Adrenal gland (tissue), 19 donors: ENCODE measurements at regions of chr9 and their contacts with region 1.

Region 1: DNA sequence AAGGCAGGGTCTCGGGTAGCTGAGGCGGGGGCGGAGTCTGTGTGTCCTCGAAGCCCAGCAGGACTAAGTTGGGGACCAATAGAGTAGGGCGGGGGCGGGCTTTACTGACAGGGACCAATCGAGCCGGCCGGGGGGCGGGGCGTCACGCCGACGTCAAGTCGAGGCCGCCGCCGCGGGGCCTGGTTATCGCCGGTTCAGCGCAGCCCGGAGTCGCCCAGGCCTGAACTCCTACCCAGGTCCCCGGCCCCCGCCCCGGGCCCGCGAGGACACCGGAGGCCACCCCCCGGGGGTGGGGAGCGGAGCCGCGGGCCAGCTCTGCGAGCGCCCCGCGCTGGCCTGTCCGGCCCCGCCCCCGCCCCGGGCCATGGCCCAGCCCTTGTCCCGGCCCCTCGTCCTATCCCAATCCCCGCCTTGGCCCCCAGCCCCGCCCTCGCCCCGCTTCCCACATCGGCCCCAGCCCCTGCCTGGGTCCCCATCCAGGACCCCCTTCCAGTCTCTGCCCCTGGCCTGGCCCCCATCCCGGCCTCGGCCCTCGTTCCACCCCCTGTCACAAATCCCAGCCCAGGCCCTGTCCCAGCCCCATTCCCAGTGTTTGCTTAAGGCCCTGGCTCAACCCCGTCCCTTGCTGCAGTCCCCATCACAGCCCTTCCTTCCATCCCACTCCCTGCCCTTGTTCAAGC is at the start of gene TMEM8B:
- DNase-seq: peak; percentile 94 to 99 (median 98)
- H3K4me3 ChIP-seq: peak within 1 kb of the TSS; percentile 39 to 98 (median 50)
- H3K27ac ChIP-seq: peak within 1 kb of the TSS; percentile 48 to 99 (median 93)
- H3K4me1 ChIP-seq: peaks cover 30 to 33% of the 10 kb centered on the region in 2 donors
- H3K27me3 ChIP-seq: no peaks in the 10 kb centered on the region
- CTCF ChIP-seq: no peak
- POLR2A ChIP-seq: peak in 1 of 2 donors; percentile 52
- total RNA-seq, gene TMEM8B: 5.5 to 43.6 (median 17.5) TPM

Region 2: GRCh38 chr9:35790385-35791296 is 38.6 kb before region 1 on chr9:
- intact Hi-C with region 1: loop called (anchors 2 to 5 kb)
- DNase-seq: peak; percentile 71 to 90 (median 79)
- H3K4me3 ChIP-seq: no peak overlapping the region
- H3K27ac ChIP-seq: peak overlapping the region in 2 of 5 donors; percentile 64 to 82
- H3K4me1 ChIP-seq: peaks cover 5 to 23% of the 10 kb centered on the region in 2 donors
- H3K27me3 ChIP-seq: no peaks in the 10 kb centered on the region
- CTCF ChIP-seq: peak; percentile 84 to 96 (median 88)
- POLR2A ChIP-seq: no peak

Region 3: DNA sequence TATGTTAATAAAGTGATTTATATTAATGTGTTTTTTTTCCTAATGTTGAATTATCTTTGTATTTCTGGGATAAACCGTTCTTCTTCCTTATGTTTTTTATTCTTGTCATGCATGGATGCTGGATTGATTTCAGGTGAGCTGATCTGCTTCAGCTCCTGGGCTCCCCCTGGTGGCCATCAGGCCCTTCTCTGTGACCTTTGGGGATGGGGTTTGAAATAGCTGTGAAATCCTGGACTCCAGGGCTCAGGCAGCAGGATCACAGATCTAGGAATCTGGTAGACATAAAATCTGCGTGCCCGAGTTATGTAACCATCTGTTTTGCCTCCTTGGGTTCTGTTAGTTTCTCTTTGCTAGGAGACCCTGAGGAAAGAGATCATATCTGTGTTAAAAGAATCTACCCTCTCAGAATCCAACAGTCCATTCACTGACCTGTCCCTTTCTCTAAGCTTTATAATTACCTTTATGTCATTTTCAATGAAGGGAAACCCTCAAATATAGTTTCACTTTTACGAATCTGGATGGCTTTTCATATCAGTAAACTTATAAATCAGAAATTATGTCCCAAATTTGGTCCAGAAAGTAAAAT is 53.1 kb after region 1 on chr9:
- intact Hi-C with region 1: loop called in 1 of 2 experiments (anchors 5 kb)
- DNase-seq: peak; percentile 73 to 94 (median 86)
- H3K4me3 ChIP-seq: no peak overlapping the region
- H3K27ac ChIP-seq: no peak overlapping the region
- H3K4me1 ChIP-seq: no peaks in the 10 kb centered on the region
- H3K27me3 ChIP-seq: no peaks in the 10 kb centered on the region
- CTCF ChIP-seq: peak; percentile 85 to 98 (median 94)
- POLR2A ChIP-seq: no peak

Region 4: DNA sequence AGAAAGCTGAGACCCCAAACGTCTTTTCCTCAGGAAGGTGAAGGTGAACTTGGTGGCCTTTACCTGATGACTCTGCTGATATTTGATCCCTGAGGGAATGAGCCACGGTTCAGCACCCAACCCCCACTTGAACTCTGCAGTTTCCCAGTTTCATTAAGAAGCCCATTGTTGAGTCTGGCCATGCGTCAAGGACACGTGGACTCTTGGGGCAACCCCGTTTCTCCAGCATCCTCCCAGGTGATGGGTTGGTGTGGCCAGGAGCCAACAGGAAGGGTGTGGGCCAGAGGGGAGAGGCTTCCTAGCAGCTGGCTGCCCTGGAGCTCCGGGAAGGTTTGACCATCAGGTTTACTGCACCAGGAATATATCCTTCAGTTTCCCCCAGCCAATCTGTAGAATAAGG is 488.5 kb after region 1 on chr9:
- intact Hi-C with region 1: no loop called
- DNase-seq: no peak
- H3K4me3 ChIP-seq: no peak overlapping the region
- H3K27ac ChIP-seq: no peak overlapping the region
- H3K4me1 ChIP-seq: peaks cover 0 to 6% of the 10 kb centered on the region in 2 donors
- H3K27me3 ChIP-seq: no peaks in the 10 kb centered on the region
- CTCF ChIP-seq: no peak
- POLR2A ChIP-seq: no peak